Colonic mucosa (tissue), 4 donors: ENCODE measurements at regions of chr22 and their contacts with region 1.

Region 1: DNA sequence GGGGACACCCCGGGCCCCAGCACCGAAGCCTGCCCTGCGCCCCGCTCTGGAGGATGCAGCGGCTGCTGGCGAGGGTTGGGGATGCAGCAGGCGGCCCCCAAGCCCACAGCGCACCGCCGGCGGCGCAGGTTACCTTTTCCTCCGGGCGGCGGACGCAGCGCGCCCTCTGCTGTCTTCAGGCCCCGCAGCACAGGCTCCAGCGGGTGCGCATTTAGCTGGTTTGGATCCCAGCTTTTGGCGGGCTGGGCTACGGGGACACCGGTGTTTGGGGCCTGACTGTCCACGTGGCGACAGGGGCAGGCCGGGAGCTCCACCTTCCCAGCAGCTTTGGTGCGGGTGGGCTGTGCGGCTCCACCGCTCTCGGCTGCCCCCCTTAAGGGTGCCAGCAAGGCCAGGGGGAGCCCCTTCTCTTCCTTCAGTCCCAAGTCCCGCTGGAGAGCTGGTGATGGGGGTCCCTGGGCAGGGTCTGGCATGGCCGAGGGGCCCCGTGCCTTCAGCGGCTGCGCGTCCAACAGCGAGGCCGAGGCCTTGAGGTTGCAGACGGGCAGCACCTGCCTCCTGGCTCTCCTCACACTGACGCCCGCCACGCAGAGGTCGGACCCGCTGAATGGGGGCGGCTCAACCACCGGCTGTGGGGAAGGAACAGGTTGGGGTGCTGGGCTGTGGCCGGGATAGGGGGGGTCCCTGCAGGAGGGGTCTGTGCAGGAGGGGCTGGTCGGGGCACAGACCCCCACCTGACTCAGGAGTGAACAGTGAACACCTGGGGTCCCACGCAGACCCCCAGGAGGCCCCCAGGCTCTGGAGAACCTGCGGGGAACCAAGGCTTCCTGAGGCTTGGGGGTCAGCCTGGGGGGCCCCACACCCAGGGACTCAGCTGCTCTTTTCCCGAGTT is 18.0 kb upstream of the IL17REL start:
- DNase-seq: peak; percentile 71
- H3K4me3 ChIP-seq: no peak overlapping the region
- H3K27ac ChIP-seq: no peak overlapping the region
- H3K4me1 ChIP-seq: no peaks in the 10 kb centered on the region
- H3K27me3 ChIP-seq: peaks cover 5% of the 10 kb centered on the region
- CTCF ChIP-seq: peak; percentile 81

Region 2: DNA sequence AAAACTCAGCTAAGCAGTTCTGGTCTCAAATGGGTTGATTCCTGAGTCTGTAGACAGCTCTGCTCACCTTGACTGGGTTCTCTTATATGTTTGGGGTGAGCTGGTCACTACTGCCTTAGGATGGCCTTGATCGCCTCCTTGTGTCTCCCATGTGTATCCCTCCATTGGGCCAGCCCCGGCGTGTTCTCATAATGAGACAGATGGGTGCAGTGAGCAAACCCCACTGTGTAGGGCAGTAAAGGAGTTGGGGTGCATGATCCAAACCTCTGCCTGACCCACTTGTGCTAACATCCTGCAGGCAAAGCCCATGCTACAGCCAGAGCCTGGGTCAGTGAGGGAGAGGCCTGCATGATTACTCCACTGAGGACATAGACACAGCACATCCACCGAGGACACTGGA is 860.5 kb before region 1 on chr22:
- intact Hi-C with region 1: no loop called
- DNase-seq: no peak
- H3K4me3 ChIP-seq: no peak overlapping the region
- H3K27ac ChIP-seq: no peak overlapping the region
- H3K4me1 ChIP-seq: no peaks in the 10 kb centered on the region
- H3K27me3 ChIP-seq: no peaks in the 10 kb centered on the region
- CTCF ChIP-seq: no peak

Region 3: DNA sequence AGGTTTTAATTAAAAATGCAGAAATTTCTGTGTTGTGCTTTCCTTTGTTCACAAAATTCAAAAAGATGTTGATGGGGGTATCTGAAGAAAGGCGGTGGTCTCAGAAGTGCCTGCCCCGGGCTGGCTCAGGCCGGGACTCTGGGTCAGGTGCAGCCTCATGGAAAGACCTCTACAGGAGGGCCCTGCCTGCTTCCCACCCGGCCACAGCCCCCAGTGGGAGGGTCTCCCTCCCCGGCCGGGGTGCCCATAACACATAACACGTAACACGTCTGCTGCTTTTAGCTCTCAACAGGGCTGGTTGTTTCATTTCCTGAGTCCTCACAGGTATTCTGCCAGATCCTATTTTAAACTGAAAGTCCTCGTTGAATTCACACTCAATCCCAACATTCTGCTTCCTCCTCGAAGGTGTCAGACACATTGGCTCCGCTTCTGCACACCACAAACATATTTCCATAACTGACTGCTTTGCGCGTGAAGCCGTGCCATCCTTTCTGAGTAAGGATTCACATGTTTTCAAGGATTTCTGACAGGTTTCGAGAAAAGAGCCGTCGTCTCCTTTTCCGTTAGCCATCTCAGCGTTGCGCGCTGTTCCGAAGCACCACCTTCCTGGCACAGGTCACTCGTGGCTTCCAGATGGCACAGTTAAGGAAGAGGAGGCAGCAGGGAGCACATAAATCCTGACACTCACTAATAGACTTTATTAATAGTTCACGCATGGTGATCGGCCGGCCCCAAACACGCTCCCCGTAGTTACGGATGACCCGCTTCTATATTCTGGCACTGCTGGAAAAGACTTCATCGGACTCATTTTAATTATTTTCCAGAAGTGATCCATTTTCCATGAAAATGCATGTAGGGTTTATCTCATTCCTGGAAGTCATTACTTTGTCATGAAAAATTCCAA is 772.2 kb before region 1 on chr22:
- intact Hi-C with region 1: no loop called
- DNase-seq: no peak
- H3K4me3 ChIP-seq: no peak overlapping the region
- H3K27ac ChIP-seq: no peak overlapping the region
- H3K4me1 ChIP-seq: no peaks in the 10 kb centered on the region
- H3K27me3 ChIP-seq: no peaks in the 10 kb centered on the region
- CTCF ChIP-seq: no peak

Region 4: DNA sequence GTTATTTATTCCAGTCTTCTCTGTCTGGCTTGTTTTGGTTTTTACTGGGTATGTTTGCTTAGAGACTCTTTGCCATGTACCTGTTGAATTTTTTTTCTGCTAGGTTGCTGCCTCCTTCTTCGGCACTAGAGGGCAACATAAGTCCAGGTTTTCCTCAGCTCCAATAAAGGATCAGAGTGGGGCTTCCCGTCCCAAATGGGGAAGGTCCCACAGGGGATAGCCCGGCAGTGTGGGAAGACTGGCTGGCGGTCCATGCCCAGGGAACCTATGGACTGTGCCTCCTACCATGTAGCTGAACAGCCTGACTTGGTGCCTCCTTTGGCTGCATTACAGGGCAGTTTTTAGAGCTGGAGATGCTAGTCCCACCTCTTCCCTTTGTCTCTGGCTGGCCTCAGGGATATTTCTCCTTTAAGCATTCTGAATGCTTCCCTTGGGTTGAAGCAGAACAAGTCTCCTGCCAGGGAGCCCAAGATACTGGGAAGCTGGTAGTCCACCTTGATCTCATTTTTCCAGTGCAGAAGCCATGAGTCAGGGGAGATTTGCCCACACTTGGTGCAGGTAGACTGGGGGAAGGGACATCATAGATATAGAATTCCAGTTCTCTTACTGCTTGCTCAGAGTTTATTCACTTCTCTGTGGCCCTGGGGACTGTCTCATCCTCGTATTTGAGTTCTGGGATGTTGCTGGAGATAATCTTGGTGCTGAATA is 263.0 kb before region 1 on chr22:
- intact Hi-C with region 1: loop called (anchors 10 kb)
- DNase-seq: no peak
- H3K4me3 ChIP-seq: no peak overlapping the region
- H3K27ac ChIP-seq: no peak overlapping the region
- H3K4me1 ChIP-seq: no peaks in the 10 kb centered on the region
- H3K27me3 ChIP-seq: no peaks in the 10 kb centered on the region
- CTCF ChIP-seq: peak; percentile 70

Region 5: DNA sequence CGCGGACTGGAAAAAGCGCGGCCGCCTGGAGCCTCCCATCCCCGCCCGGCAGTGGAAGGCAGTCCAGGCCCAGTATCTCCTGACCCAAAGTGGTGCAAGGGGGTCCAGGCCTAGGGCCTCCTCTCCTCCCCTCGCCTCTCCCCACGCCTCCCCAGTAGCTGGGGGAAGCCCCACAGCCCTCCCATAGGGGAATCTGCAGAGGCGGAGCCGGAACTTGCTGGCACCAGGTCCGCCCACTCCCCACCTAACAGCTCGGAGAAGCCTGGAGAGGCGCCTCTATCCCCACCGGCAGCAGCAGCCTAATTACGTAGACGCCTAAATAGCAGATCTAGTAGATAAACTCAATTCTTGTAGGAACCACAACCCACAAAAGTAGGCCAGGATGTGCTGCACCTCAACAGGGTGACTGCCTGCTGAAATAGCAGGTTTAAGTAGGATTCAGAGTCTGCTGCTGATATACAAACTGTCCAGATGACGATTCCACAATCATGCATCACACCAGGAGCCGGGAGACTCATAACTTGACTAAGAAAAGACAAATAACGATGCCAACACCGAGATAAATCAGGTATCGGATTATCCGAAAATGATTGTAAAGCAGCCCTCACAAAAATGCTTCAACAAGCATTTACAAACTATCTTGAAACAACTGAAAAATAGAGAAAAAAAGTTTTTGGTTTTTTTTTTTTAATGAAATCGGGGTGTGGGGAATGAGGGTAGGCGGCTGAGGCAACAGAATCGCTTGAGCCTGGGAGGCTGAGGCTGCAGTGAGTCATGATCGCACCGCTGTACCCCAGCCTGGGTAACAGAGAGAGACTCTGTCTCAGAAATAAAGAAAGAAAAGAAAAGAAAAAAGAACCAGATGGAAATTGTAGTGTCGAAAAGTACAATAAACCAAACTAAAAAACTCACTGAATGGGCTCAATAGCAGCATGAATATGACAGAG is 191.5 kb before region 1 on chr22:
- intact Hi-C with region 1: no loop called
- DNase-seq: peak; percentile 30
- H3K4me3 ChIP-seq: no peak overlapping the region
- H3K27ac ChIP-seq: no peak overlapping the region
- H3K4me1 ChIP-seq: no peaks in the 10 kb centered on the region
- H3K27me3 ChIP-seq: no peaks in the 10 kb centered on the region
- CTCF ChIP-seq: no peak

Region 6: DNA sequence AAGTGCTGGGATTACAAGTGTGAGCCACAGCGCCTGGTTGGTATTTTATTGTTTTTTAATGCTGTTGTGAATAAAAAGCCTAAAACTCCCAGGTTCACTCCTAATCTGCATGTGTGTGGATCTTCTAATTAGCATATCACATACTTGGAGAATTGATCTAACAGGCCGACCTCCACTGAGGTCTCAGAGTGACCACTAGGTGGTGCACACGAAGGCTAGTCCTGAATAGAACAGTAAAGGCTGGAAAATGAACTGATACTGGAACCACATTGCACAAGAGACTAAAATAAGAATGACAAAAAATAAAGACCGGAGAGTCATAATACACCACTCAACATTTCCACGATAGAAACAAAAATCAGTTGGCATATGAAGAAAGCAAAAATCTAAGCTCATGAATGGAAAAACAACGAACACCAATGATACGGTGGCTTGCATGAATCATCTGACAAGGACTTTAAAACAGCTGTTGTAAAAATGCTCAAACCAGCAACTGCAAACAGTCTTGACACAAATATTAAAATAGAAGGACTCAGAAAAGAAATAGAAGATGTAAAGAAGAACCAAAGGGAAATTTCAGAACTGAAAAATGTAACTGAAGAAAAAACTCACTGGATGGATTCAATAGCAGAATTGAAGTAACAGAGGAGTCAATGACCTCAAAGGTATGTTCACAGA is 50.8 kb before region 1 on chr22:
- intact Hi-C with region 1: loop called (anchors 5 kb)
- DNase-seq: peak; percentile 57
- H3K4me3 ChIP-seq: no peak overlapping the region
- H3K27ac ChIP-seq: no peak overlapping the region
- H3K4me1 ChIP-seq: peaks cover 7% of the 10 kb centered on the region
- H3K27me3 ChIP-seq: peaks cover 16% of the 10 kb centered on the region
- CTCF ChIP-seq: peak; percentile 60